Cardiac septum (tissue), 1 donor: ENCODE measurements at regions of chr1 and their contacts with region 1.

Region 1: GRCh38 chr1:183023601-183024316 is 539 bp downstream of the LAMC1 start:
- DNase-seq: peak; percentile 88

Region 2: GRCh38 chr1:182861994-182862393 is 161.8 kb before region 1 on chr1:
- intact Hi-C with region 1: no loop called
- DNase-seq: no peak

Region 3: GRCh38 chr1:182962554-182963115 is 61.1 kb before region 1 on chr1:
- intact Hi-C with region 1: loop called (anchors 2 kb)
- DNase-seq: peak; percentile 83

Region 4: DNA sequence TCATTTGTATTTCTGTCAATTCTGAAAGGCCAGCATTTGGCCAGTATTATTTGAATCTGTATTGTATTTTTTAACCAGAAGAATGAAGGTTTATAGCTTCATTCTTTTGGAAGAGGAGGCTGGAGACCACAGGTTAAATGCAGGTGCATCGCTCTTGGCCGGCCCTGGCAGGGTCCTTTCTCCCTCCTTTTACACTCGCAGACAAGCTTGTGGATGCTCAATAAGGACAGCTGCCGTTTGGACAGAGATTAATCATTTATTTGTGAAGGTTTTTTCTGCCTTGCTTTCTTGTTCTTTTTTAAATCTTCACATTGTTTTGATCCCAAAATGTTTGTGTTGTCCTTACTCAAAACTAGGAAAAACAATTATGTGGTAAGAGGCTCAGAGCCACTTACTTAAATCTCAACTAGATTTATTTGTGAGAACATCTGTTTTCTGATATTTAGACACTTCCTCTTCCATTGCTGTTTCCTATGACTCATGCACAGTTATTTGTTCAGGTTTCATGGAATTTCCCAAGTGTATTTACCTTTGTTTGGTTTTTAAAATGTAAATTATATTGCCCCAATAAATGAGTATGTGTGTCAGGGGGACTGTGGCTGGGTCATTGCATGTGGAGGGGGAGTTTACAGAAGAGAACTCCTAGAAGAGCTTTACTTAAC is 115.7 kb after region 1 on chr1:
- intact Hi-C with region 1: loop called (anchors 5 kb)
- DNase-seq: no peak

Region 5: GRCh38 chr1:183180634-183181056 is 156.9 kb after region 1 on chr1:
- intact Hi-C with region 1: loop called (anchors 2 kb)
- DNase-seq: peak; percentile 80

Region 6: DNA sequence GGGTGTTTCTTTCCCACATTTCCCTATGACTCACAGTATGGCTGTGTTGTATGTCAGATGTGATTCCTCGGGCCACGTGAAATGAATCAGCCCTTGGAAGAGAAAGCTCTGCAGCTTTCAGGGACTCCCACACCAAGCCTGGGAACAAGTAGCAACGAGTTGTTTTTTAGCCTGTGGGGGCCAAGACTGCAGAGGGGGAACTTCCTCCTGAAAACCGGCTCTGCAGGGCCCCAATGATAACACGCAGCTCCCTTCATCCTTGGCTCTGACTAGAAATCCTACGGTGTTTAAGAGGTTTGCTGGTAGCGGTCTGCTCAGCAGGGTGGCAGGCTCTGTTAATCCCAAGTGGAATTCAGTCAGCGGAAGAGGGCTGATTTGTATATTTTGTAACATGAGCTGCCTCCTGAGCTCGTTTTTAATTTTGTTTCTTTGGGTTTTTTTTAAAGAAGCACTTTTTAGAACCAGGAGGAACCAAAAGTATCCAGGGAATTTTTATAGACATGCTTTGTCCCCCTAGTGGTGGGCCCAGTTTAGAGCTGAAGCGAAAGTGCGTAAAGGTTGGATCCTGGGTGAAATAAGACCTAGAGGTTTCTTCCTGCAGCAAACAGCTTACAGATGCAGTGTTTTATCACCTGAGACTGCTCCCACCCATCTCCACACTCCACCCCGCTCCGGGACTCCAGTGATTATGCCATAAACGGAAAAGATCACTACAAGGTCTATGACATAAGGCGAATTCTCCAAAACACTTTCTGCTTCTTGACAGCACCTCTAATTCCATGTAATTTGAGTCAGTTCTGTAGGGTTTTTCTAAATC is 211.1 kb after region 1 on chr1:
- intact Hi-C with region 1: loop called (anchors 5 kb)
- DNase-seq: no peak